ENCODE measurements at regions of chr1 and their contacts with region 1.

Region 1: GRCh38 chr1:12314333-12314903 is 84.6 kb downstream of the VPS13D start:
- DNase-seq: no peak

Region 2: DNA sequence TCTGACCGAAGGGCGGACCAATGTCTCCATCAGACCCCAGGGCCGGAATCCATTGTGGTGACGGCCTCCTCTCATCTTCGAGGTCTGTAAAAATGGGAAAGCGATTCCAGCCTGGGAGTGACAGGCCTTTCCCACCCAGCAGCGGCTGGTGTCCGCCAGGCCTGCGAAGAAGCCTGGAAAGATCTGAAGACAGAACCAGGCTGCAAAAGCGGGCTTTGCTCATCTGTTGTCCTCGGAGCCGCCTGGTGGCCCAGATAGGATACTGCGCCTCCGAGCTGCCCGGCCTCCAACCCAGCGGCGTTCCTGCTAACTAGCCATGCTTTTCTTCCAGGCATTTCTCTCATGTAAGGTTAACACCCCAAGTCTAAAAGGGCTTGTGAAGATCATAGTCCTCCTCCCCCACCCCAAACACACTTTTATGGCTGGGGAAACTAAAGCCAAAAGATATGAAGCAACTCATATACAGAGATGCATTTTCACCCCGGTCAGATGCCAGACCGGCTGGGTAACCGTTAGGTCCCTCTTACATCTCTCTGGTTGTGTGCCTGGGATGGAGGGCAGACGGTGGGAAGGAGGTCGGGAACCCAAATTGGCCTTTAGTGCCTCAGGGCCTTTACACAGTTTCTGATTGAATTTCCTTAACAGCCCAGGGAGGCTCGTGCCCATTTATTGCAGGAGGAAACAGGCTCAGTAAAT is 305.5 kb after region 1 on chr1:
- intact Hi-C with region 1: loop called (anchors 10 kb)
- DNase-seq: peak; percentile 96

Measured in posterior vena cava (tissue), 2 donors.